ENCODE measurements at regions of chr19 and their contacts with region 1.

Region 1: GRCh38 chr19:40633207-40633606 is 32.0 kb downstream of the LTBP4 start:
- DNase-seq: no peak
- ATAC-seq: no peak

Region 2: GRCh38 chr19:40139533-40140287 is 493.5 kb before region 1 on chr19:
- intact Hi-C with region 1: loop called (anchors 10 kb)
- DNase-seq: no peak
- ATAC-seq: no peak

Region 3: GRCh38 chr19:40305403-40305802 is 327.8 kb before region 1 on chr19:
- intact Hi-C with region 1: loop called (anchors 10 kb)
- DNase-seq: no peak
- ATAC-seq: no peak

Region 4: DNA sequence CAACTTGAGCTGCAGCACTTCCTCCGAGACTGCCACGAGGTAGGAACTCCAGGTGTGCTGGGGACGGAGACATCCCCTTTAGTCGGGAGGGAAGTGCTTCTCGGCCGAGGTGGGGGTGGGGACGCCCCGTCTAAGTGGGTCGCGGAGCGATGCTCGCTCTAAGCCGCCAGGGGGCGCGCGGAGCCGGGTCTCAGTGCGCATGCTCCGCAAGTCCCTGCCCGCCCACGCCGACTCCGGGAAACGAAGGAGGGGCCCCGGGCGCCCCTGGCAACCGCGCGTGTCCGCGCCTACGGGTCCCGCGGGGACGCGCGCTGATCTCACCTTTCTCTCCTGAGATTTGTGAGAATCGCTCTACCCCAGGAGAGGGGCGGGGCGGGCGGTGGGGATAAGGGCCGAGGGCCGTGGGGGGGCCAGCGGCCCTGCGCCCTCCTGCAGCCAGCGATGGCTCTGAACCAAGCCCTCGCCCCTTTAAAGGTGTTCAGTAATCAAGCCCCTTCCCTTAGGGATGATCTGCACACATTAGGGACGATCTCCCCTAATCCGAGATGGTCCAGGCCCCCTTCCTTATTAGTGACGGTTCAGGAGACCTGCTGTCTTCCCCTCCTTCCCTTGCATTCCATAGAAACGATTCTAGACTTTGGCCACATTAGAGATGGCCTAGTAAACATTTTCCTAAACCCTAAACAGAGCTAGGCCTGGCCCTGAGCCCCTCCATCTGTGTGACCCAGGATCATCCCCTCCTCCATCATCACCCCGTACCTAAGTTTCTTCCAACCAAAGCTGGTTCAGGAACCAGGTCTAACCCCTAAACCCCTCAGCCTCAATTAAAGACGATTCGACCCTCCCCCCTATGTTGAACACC is 103.9 kb before region 1 on chr19:
- intact Hi-C with region 1: loop called (anchors 5 kb)
- DNase-seq: peak; percentile 92
- ATAC-seq: peak; percentile 84

Region 5: GRCh38 chr19:40542202-40542859 is 90.9 kb before region 1 on chr19:
- intact Hi-C with region 1: loop called (anchors 5 kb)
- DNase-seq: peak; percentile 93
- ATAC-seq: peak; percentile 92

Region 6: GRCh38 chr19:40613640-40614303 is 19.4 kb before region 1 on chr19:
- intact Hi-C with region 1: no loop called
- DNase-seq: peak; percentile 90
- ATAC-seq: peak; percentile 64

Region 7: GRCh38 chr19:40962460-40962961 is 329.3 kb after region 1 on chr19:
- intact Hi-C with region 1: no loop called
- DNase-seq: no peak
- ATAC-seq: no peak

Measured in Right ventricle myocardium inferior (tissue), 1 donor.